H1 (cell line): ENCODE measurements at regions of chr2 and their contacts with region 1.

Region 1: GRCh38 chr2:217988014-217988839 is 14.6 kb downstream of the TNS1 start:
- DNase-seq: peak; percentile 81 to 97
- H3K4me3 ChIP-seq: peak overlapping the region in 3 of 4 experiments; percentile 6 to 51 (median 15); a peak in 2 of 8 replicates
- H3K27ac ChIP-seq: peak overlapping the region; percentile 63; the same call in 1 of the 2 replicates
- H3K4me1 ChIP-seq: peaks cover 0 to 12% (median 2%) of the 10 kb centered on the region in 4 experiments; a peak in 4 of 7 replicates
- H3K27me3 ChIP-seq: no peaks in the 10 kb centered on the region; a peak in 1 of 7 replicates
- CTCF ChIP-seq: peak in 2 of 3 experiments; percentile 90 to 92; a peak in 3 of 4 replicates
- EP300 ChIP-seq: peak in 1 of 2 experiments; percentile 91; a peak in 2 of 3 replicates
- POLR2A ChIP-seq: peak in 1 of 2 experiments; percentile 33; a peak in 1 of 3 replicates
- RAD21 ChIP-seq: peak; percentile 94 to 97

Region 2: DNA sequence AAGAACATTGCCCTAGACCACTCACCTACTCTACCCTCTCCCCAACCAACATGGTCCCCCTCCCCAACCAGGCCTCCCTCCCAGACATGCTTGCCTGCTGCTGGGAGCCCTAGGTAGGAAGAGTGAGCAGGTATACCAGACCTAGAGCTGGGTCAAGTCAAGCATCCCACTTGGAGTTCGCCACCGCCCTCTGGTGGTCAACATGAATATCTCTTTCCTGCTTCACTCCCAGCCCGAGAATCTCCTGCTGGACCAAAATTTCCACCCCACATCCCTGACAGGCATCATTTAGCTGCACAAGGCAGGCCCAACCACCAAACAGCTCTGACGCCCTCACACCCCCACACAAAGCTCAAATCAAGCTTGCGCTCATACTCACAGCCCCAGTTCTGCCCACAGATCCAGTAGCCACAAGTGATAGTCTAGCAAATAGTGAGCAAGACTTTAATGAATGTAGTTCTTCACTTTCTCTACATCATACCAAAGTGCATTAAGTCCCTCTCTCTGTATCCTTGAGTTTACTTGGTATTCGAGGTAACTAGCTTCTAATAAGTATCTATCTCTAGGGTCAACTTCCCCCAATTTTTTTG is 101.4 kb before region 1 on chr2:
- CTCF ChIA-PET with region 1: interaction called, 59 read pairs
- POLR2A ChIA-PET with region 1: interaction called, 4 read pairs
- DNase-seq: peak; percentile 47 to 92
- H3K4me3 ChIP-seq: no peak overlapping the region
- H3K27ac ChIP-seq: no peak overlapping the region
- H3K4me1 ChIP-seq: no peaks in the 10 kb centered on the region
- H3K27me3 ChIP-seq: no peaks in the 10 kb centered on the region
- CTCF ChIP-seq: peak; percentile 88 to 95 (median 94)
- EP300 ChIP-seq: no peak
- POLR2A ChIP-seq: no peak
- RAD21 ChIP-seq: peak; percentile 90

Region 3: DNA sequence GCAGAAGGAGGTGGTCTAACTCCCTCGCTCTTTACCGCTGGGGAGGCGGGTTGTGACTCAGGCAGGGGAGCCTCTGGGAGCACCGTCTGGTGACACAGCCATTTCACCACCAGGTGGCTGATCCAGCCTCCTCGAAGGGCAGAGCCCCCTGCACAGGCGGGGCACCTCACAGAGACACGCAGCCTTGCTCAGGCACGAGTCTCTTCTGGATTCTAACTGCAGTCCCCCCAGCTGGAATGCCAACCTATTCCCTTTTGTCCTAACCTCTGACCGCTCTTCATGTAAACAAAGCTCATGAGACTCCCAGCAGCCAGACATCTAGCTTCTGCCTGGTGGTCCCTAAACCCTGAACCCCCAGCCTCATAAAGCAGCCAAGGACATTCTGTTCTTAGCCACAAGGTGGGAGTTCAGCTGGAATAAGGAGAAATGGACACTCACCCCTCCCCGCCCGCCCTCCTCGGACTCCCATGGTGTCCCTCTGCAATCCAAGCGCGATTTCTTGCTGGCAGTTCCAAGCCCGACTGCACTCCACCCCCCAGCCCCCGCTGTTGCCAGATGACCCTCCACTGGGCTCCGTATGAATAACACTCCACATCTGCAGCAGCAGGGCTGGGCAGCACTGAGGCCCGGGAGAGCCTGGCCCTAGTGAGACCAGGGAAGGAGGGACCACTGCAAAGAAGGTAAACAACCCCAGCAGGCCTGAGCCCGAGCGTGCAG is 69.8 kb before region 1 on chr2:
- CTCF ChIA-PET with region 1: interaction called, 36 read pairs
- POLR2A ChIA-PET with region 1: no interaction called
- DNase-seq: no peak
- H3K4me3 ChIP-seq: no peak overlapping the region
- H3K27ac ChIP-seq: no peak overlapping the region
- H3K4me1 ChIP-seq: peaks cover 9 to 48% (median 33%) of the 10 kb centered on the region in 4 experiments
- H3K27me3 ChIP-seq: peaks cover 0 to 4% (median 0%) of the 10 kb centered on the region in 4 experiments; a peak in 3 of 7 replicates
- CTCF ChIP-seq: peak; percentile 53 to 63 (median 55)
- EP300 ChIP-seq: no peak
- POLR2A ChIP-seq: no peak
- RAD21 ChIP-seq: peak in 1 of 2 experiments; percentile 45; a peak in 3 of 4 replicates

Region 4: DNA sequence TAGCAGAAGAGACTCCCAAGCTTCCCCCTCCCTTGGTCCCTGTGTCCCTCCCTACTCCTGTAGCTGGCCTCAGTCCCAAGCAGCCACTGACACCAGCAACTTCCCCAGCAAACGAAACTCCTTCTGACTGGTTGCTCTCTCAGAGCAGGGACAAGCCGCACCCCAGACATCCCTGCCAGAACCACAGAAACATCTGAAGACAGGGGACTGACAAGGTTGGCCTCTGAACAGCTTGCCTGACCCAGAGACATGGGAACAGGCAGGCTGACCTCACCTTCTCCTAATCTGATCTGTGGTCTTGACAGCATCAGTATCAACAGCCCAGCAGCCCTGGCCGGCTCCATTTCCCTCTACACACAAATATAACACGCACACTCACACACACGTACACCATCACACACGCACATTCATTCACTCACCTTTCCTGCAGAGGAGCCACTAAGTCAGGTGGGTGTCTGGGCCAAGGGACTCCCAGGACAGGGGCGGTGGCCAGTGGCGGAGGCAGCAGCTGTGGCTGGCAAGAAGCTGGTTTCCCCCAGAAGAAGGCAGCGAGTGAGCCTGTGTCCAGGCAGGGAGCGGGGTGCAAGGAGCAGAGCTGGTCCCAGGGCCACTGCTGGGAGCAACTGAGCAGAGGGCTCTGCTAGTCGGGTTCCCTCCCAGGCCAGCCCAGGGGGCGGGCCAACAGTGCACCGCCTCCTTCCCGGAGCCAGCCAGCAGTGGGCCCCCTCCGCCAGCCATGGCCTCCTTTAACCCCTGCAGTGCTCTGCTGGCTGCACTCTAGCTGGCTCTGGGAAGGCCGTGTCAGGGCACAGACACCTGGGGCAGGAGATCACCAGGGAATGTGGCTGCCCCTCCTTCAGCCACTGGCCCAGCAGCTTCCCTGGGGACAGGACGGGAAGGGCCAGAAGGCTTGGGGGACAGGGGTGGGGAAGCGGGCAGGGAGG is 44.5 kb before region 1 on chr2:
- CTCF ChIA-PET with region 1: interaction called, 480 read pairs
- POLR2A ChIA-PET with region 1: no interaction called
- DNase-seq: peak in 1 of 2 experiments; percentile 83
- H3K4me3 ChIP-seq: 0 out of 8 replicates have a peak overlapping the region, but pooled peaks of 1 of the 4 experiments have one; percentile 10
- H3K27ac ChIP-seq: no peak overlapping the region
- H3K4me1 ChIP-seq: peaks cover 3 to 16% (median 9%) of the 10 kb centered on the region in 4 experiments
- H3K27me3 ChIP-seq: no peaks in the 10 kb centered on the region
- CTCF ChIP-seq: peak; percentile 27 to 43 (median 34); a peak in 3 of 4 replicates
- EP300 ChIP-seq: no peak
- POLR2A ChIP-seq: peak in 1 of 2 experiments; percentile 26; a peak in 1 of 3 replicates
- RAD21 ChIP-seq: peak; percentile 43 to 61; a peak in 3 of 4 replicates

Region 5: DNA sequence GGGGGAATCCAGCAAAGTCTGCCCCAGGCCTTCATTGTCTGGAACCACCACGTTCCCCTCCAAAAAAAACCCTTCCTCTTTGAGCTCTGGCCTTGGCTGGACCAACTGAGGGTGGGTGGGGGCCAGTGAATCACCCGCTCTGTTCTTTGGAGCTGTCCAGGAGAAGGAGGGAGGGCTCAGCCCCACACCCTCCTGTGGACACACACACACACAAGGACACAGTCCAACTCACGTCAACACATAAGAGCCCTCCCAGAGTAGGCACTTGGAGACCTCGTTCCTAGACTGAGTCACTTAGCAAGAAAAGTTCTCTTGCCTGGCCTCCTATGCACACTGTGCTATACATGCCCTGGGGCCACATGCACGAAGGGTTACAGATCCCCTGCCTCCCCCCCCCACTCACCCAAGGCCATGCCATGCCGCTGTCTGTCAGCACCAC is 15.8 kb after region 1 on chr2:
- CTCF ChIA-PET with region 1: interaction called, 30 read pairs
- POLR2A ChIA-PET with region 1: interaction called, 3 read pairs
- DNase-seq: no peak
- H3K4me3 ChIP-seq: no peak overlapping the region
- H3K27ac ChIP-seq: no peak overlapping the region
- H3K4me1 ChIP-seq: peaks cover 0 to 24% (median 15%) of the 10 kb centered on the region in 4 experiments; a peak in 6 of 7 replicates
- H3K27me3 ChIP-seq: peaks cover 0 to 11% (median 9%) of the 10 kb centered on the region in 4 experiments; a peak in 6 of 7 replicates
- CTCF ChIP-seq: no peak
- EP300 ChIP-seq: no peak
- POLR2A ChIP-seq: no peak
- RAD21 ChIP-seq: no peak

Region 6: DNA sequence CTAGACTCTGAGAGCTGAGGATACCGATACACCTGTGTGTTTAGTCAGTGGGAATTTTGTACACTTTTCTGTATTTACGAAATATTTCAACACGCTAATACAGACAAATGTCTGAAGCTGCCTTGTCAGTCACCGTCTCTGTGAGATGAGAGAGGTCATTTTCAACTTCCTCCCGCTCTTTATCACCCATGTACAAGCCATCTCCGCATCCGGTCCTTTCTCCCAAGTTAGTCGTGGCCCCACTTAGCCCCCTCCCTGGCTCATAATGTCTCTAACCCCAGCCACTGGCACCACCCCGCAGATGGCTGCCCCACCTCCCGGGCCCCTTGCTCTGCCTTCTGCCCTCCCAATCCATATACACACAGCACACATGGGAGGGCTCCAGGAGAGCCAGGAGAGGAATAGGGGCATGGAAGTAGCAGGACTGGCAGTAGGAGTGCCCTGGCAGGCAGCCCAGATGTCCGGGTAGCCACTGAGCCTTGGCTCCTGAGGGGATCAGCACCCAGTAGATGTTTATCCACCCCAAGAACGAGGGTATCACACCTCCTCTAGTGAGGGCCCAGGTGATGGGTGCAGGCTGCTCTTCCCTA is 78.8 kb after region 1 on chr2:
- CTCF ChIA-PET with region 1: interaction called, 19 read pairs
- POLR2A ChIA-PET with region 1: no interaction called
- DNase-seq: no peak
- H3K4me3 ChIP-seq: no peak overlapping the region
- H3K27ac ChIP-seq: no peak overlapping the region
- H3K4me1 ChIP-seq: peaks cover 0 to 16% (median 8%) of the 10 kb centered on the region in 4 experiments; a peak in 6 of 7 replicates
- H3K27me3 ChIP-seq: peaks cover 0 to 5% (median 3%) of the 10 kb centered on the region in 4 experiments; a peak in 4 of 7 replicates
- CTCF ChIP-seq: no peak
- EP300 ChIP-seq: no peak
- POLR2A ChIP-seq: no peak
- RAD21 ChIP-seq: no peak